GM10248 (cell line): ENCODE measurements at regions of chr7 and their contacts with region 1.

Region 1: GRCh38 chr7:101058355-101058754 is 26.9 kb upstream of the TRIM56 start:
- DNase-seq: peak; percentile 36
- CTCF ChIP-seq: no peak

Region 2: GRCh38 chr7:100516135-100516812 is 542.1 kb before region 1 on chr7:
- CTCF ChIA-PET with region 1: no interaction called
- POLR2A ChIA-PET with region 1: no interaction called
- DNase-seq: peak; percentile 48
- CTCF ChIP-seq: no peak

Region 3: GRCh38 chr7:100889761-100890634 is 168.4 kb before region 1 on chr7:
- CTCF ChIA-PET with region 1: interaction called, 16 read pairs
- POLR2A ChIA-PET with region 1: no interaction called
- DNase-seq: peak; percentile 99
- CTCF ChIP-seq: no peak

Region 4: GRCh38 chr7:100897772-100898454 is 160.4 kb before region 1 on chr7:
- CTCF ChIA-PET with region 1: interaction called, 16 read pairs
- POLR2A ChIA-PET with region 1: no interaction called
- DNase-seq: no peak
- CTCF ChIP-seq: no peak

Region 5: GRCh38 chr7:100957832-100958421 is 100.4 kb before region 1 on chr7:
- CTCF ChIA-PET with region 1: interaction called, 10 read pairs
- POLR2A ChIA-PET with region 1: no interaction called
- DNase-seq: no peak
- CTCF ChIP-seq: no peak

Region 6: GRCh38 chr7:101399759-101400158 is 341.4 kb after region 1 on chr7:
- CTCF ChIA-PET with region 1: no interaction called
- POLR2A ChIA-PET with region 1: no interaction called
- DNase-seq: no peak
- CTCF ChIP-seq: no peak